HCT116 (cell line): ENCODE measurements at regions of chr7 and their contacts with region 1.

Region 1: GRCh38 chr7:98841179-98841997 is 28.4 kb downstream of the TMEM130 start:
- DNase-seq: no peak
- ATAC-seq: peak; percentile 83
- H3K4me3 ChIP-seq: no peak overlapping the region
- H3K27ac ChIP-seq: no peak overlapping the region
- H3K4me1 ChIP-seq: peaks cover 4 to 12% of the 10 kb centered on the region in 2 experiments; a peak in 2 of 4 replicates
- H3K27me3 ChIP-seq: no peaks in the 10 kb centered on the region
- CTCF ChIP-seq: peak; percentile 89 to 98 (median 96)
- POLR2A ChIP-seq: no peak
- RAD21 ChIP-seq: peak; percentile 98

Region 2: DNA sequence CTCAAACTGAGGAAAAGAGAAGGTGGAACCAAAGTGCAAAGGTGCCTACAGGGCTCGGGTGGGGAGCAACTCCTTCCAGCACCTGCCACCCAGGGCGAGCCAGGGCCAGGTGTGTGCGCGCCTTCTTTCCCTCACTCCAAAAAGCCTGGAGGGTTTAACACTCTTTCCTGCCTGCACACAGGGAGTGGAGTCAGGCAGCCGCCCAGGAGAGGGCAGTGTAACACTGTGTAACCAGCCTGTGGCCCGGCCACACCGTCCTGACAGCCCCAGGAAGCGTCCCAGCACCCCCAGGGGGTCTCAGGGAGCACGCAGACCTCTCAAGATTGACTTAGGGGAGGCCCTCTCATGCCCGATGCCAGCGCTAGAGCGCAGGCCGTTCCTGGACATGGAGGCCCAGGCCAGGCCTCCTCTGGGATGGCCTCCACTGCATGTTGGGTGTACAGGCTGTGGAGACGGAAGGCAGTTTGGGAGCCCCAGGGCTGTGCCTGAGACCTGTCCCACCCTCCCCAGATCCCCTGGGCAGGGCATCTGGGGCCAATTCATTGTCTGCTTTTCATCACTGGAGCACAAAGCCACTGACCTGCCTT is 546.5 kb before region 1 on chr7:
- CTCF ChIA-PET with region 1: no interaction called
- POLR2A ChIA-PET with region 1: no interaction called
- RAD21 ChIA-PET with region 1: no interaction called
- intact Hi-C with region 1: loop called (anchors 2 kb)
- DNase-seq: peak; percentile 41
- ATAC-seq: peak; percentile 93
- H3K4me3 ChIP-seq: no peak overlapping the region
- H3K27ac ChIP-seq: peak overlapping the region; percentile 21; the same call in 1 of the 2 replicates
- H3K4me1 ChIP-seq: peaks cover 0 to 13% of the 10 kb centered on the region in 2 experiments; a peak in 2 of 4 replicates
- H3K27me3 ChIP-seq: no peaks in the 10 kb centered on the region
- CTCF ChIP-seq: peak; percentile 79 to 86 (median 82); a peak in 5 of 6 replicates
- POLR2A ChIP-seq: no peak
- RAD21 ChIP-seq: peak; percentile 98

Region 3: GRCh38 chr7:98434095-98434494 is 407.3 kb before region 1 on chr7:
- CTCF ChIA-PET with region 1: interaction called, 12 read pairs
- POLR2A ChIA-PET with region 1: interaction called, 6 read pairs
- RAD21 ChIA-PET with region 1: no interaction called
- intact Hi-C with region 1: loop called (anchors 1 kb)
- DNase-seq: no peak
- ATAC-seq: no peak
- H3K4me3 ChIP-seq: no peak overlapping the region
- H3K27ac ChIP-seq: no peak overlapping the region
- H3K4me1 ChIP-seq: no peaks in the 10 kb centered on the region
- H3K27me3 ChIP-seq: no peaks in the 10 kb centered on the region
- CTCF ChIP-seq: no peak
- POLR2A ChIP-seq: no peak
- RAD21 ChIP-seq: no peak

Region 4: DNA sequence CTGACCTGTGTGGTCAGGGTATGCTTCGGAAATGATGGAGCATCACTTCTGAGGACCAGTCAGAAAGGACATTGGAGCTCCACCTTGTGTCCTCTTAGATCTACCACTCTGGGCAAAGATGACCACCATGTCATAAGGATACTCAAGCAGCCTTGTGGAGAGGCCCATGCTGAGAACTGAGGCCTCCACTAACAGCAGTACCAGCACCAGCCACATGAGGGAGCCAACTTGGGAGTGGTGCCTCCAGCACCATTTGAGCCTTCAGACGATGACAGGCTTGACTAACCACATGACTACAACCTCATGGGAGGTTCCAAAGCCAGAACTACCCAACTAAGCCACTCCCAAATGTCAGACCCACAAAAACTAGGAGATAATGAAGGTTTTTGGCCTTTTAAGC is 108.4 kb before region 1 on chr7:
- CTCF ChIA-PET with region 1: interaction called, 4 read pairs
- POLR2A ChIA-PET with region 1: no interaction called
- RAD21 ChIA-PET with region 1: no interaction called
- intact Hi-C with region 1: loop called (anchors 2 kb)
- DNase-seq: peak; percentile 85
- ATAC-seq: peak; percentile 97
- H3K4me3 ChIP-seq: no peak overlapping the region
- H3K27ac ChIP-seq: no peak overlapping the region
- H3K4me1 ChIP-seq: no peaks in the 10 kb centered on the region
- H3K27me3 ChIP-seq: no peaks in the 10 kb centered on the region
- CTCF ChIP-seq: peak; percentile 57 to 90 (median 90)
- POLR2A ChIP-seq: no peak
- RAD21 ChIP-seq: peak; percentile 59

Region 5: GRCh38 chr7:99079104-99079503 is 237.7 kb after region 1 on chr7:
- CTCF ChIA-PET with region 1: no interaction called
- POLR2A ChIA-PET with region 1: no interaction called
- RAD21 ChIA-PET with region 1: no interaction called
- intact Hi-C with region 1: no loop called
- DNase-seq: no peak
- ATAC-seq: no peak
- H3K4me3 ChIP-seq: no peak overlapping the region
- H3K27ac ChIP-seq: no peak overlapping the region
- H3K4me1 ChIP-seq: no peaks in the 10 kb centered on the region
- H3K27me3 ChIP-seq: no peaks in the 10 kb centered on the region
- CTCF ChIP-seq: no peak
- POLR2A ChIP-seq: no peak
- RAD21 ChIP-seq: no peak